BJ (cell line): ENCODE measurements at regions of chr5 and their contacts with region 1.

Region 1: DNA sequence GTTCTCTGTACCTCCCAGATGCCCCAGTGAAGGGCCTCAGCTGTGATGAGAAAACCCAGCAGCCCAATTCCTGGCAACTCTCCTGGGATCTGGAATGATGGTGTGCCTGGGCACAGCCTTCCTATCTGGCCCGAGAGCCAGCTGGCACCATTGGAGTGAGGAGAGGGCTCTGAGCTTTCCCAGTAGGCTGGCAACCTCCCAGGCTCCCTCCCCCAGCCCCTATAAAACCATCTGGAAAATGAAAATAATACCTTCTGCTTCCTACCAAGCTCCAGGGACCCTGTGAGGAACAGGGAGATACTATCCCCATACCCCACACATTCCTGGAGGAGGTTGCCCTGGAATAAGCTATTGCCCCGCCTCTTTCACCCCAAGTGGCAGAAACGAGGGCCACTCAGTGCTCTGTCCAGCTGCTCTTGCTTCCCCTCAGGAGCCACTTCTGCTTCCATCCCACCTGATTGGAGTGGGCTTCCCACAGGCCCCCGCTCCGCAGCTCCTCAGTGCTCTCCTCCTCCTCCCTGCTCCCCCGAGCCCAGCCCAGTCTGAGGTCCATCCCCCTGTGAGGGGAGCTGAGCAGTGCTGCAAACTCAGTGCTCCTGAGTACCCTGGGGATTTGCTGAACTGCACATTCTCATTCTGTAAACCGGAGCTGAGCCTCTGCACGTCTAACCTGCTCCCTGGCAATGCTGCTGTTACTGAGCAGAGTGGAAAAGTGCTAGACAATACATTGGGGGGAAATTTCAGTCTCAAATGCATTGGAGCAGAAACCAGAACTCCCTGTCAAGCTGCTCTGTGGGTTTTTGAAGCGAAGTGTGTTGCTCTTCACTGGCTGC is 74.7 kb downstream of the THBS4 start:
- DNase-seq: no peak
- H3K4me3 ChIP-seq: no peak overlapping the region
- H3K27me3 ChIP-seq: peaks cover 1% of the 10 kb centered on the region; the same call in 1 of the 2 replicates
- CTCF ChIP-seq: no peak

Region 2: DNA sequence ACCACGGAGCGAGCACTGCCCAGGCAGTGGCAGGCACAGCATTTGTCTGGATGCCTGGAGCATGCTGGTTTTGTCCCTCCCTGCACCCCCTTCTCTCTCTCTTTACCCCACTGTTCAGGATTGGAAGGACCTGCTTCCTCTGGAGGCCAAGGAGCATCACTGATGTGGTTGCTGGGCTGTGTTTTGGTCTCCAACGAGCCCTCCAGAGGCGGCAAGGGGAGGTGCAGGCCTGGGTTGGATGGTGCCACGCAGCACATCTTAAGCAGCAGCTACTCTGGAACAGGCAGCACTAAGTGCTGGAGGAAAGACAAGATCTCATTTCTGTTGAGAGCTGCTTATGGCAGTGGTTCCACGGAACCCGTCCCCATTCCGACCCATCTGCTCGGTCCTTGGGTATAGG is 280.6 kb before region 1 on chr5:
- CTCF ChIA-PET with region 1: no interaction called
- POLR2A ChIA-PET with region 1: no interaction called
- DNase-seq: no peak
- H3K4me3 ChIP-seq: no peak overlapping the region
- H3K27me3 ChIP-seq: no peaks in the 10 kb centered on the region; the same call in 1 of the 2 replicates
- CTCF ChIP-seq: peak; percentile 35

Region 3: DNA sequence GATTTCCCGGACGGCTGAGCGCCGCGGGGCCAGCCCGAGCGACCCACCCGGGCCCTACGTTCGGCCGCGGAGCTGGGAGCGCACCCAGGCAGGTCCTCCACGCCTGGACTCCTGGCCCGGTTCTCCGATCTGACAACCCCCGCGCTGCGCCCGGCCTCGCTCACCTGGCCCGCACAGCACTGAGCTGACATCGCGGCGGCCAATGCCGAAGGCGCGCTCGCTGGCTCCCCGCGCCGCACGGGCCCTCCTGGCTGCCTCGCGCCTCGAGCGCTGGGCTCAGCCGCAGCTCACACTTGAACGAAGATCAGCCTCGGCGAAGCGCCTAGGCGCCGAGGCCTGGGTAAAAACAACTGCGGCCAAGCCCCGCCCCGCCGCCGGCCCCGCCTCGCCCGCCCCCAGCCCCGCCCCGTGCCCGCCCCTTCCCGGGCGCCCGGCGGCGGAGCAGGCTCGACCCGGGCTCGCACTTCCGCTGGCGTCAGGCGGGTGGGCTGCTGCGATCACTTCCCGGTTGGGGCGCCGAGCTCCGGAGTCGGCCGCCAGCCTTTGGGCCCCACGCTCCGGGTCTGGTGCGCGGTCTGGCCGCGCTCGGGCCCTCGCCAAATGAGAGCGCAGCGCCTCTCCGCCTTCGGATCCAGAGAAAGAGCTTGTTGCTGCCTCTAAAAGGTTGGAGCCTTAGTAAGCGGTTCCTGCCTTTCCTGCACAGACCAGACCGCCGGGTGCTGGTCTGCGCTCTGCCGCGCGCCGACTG is 146.0 kb after region 1 on chr5 and contains the start of gene SERINC5:
- CTCF ChIA-PET with region 1: interaction called, 3 read pairs
- POLR2A ChIA-PET with region 1: interaction called, 17 read pairs
- DNase-seq: no peak
- H3K4me3 ChIP-seq: peak within 1 kb of the TSS; percentile 84
- H3K27me3 ChIP-seq: no peaks in the 10 kb centered on the region
- CTCF ChIP-seq: no peak
- polyA plus RNA-seq, gene SERINC5: 11.0 and 12.9 TPM in 2 replicates